ENCODE measurements at regions of chr3 and their contacts with region 1.

Region 1: GRCh38 chr3:27533718-27534573 is 49.8 kb upstream of the SLC4A7 start:
- DNase-seq: peak; percentile 97
- H3K4me3 Mint-ChIP-seq: peak overlapping the region; percentile 33
- H3K27ac Mint-ChIP-seq: peak overlapping the region; percentile 98
- H3K4me1 Mint-ChIP-seq: peaks cover 34% of the 10 kb centered on the region
- H3K27me3 Mint-ChIP-seq: no peaks in the 10 kb centered on the region
- CTCF ChIP-seq: peak; percentile 32

Region 2: DNA sequence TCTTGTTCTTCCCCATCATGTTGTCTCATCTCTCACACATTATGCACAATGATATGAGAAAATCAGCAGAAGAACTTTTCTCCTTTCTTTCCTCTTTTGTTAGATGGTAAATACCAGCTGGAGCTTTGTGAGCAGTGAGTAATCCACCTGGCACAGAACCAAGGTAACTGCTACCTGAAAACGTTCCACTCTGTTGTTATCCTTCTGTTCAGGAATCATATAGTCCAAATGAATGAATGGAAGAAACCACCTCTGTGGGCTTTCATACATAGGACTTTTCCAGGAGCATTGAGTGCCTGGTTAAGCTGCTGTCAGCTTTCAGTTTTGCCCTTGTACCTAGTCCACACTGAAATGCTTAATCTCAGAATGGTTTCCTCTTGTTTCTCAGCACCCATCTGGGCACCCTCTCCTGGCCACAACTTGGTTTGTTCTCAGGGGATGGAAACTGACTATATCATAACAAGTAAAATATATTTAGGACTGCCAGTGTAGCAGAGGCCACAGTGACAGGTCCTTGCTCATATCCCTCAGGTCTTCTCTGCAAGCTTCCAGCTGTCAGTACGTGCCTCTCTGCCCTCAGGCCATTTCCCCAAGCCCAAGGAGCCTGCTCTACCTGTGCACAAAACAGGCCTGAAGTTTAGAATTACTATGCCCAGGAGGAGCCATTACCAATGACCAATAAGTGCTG is 26.3 kb before region 1 on chr3:
- CTCF ChIA-PET with region 1: interaction called, 6 read pairs
- POLR2A ChIA-PET with region 1: interaction called, 27 read pairs
- intact Hi-C with region 1: no loop called
- DNase-seq: peak; percentile 74
- H3K4me3 Mint-ChIP-seq: no peak overlapping the region
- H3K27ac Mint-ChIP-seq: no peak overlapping the region
- H3K4me1 Mint-ChIP-seq: peaks cover 13% of the 10 kb centered on the region
- H3K27me3 Mint-ChIP-seq: no peaks in the 10 kb centered on the region
- CTCF ChIP-seq: no peak

Region 3: GRCh38 chr3:27544372-27544865 is 10.5 kb after region 1 on chr3:
- CTCF ChIA-PET with region 1: no interaction called
- POLR2A ChIA-PET with region 1: interaction called, 33 read pairs
- intact Hi-C with region 1: no loop called
- DNase-seq: peak; percentile 76
- H3K4me3 Mint-ChIP-seq: no peak overlapping the region
- H3K27ac Mint-ChIP-seq: peak overlapping the region; percentile 75
- H3K4me1 Mint-ChIP-seq: peaks cover 14% of the 10 kb centered on the region
- H3K27me3 Mint-ChIP-seq: no peaks in the 10 kb centered on the region
- CTCF ChIP-seq: no peak

Region 4: DNA sequence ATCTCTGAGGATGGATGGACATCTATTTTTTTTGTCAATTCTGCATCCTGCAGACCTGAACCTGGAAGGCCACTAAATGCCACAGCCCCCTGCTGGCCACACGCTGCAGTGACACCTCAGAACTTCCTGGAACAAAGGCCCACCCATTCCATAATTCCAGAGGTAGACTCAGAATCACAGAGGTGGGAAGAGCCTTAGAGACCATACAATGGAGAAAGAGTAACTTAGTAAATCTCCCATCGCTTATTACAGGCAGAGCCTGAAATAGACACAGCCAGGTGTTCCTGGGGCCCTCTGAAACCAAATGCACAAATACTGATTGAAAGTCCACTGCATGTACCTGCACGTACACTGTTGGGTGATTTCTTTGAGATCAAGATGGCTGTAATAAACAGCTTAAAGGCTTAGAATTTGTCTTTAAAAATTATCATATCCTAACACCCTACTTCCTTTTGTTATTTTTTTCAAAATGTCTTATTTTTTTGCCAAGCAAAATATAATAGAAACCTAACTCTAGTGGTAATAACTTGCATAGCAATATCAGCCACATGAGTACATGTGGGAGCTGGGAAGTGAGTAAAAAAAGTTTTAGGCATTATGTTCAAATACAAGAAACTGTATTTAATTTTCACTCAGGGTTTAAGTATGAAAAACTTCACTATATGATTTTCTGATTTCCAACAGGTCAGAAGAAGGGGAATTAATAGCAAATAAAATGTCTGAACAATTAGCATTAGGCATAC is 125.5 kb after region 1 on chr3:
- CTCF ChIA-PET with region 1: no interaction called
- POLR2A ChIA-PET with region 1: no interaction called
- intact Hi-C with region 1: loop called (anchors 5 kb)
- DNase-seq: peak; percentile 66
- H3K4me3 Mint-ChIP-seq: no peak overlapping the region
- H3K27ac Mint-ChIP-seq: no peak overlapping the region
- H3K4me1 Mint-ChIP-seq: peaks cover 5% of the 10 kb centered on the region
- H3K27me3 Mint-ChIP-seq: no peaks in the 10 kb centered on the region
- CTCF ChIP-seq: peak; percentile 82

Region 5: GRCh38 chr3:27888562-27888961 is 354.6 kb after region 1 on chr3:
- CTCF ChIA-PET with region 1: no interaction called
- POLR2A ChIA-PET with region 1: no interaction called
- intact Hi-C with region 1: no loop called
- DNase-seq: peak; percentile 20
- H3K4me3 Mint-ChIP-seq: no peak overlapping the region
- H3K27ac Mint-ChIP-seq: no peak overlapping the region
- H3K4me1 Mint-ChIP-seq: no peaks in the 10 kb centered on the region
- H3K27me3 Mint-ChIP-seq: no peaks in the 10 kb centered on the region
- CTCF ChIP-seq: no peak

Region 6: GRCh38 chr3:28624084-28624483 is 1090.1 kb after region 1 on chr3:
- CTCF ChIA-PET with region 1: no interaction called
- POLR2A ChIA-PET with region 1: no interaction called
- intact Hi-C with region 1: no loop called
- DNase-seq: no peak
- H3K4me3 Mint-ChIP-seq: no peak overlapping the region
- H3K27ac Mint-ChIP-seq: no peak overlapping the region
- H3K4me1 Mint-ChIP-seq: peaks cover 3% of the 10 kb centered on the region
- H3K27me3 Mint-ChIP-seq: no peaks in the 10 kb centered on the region
- CTCF ChIP-seq: no peak